IMR-90 (cell line): ENCODE measurements at regions of chr6 and their contacts with region 1.

Region 1: DNA sequence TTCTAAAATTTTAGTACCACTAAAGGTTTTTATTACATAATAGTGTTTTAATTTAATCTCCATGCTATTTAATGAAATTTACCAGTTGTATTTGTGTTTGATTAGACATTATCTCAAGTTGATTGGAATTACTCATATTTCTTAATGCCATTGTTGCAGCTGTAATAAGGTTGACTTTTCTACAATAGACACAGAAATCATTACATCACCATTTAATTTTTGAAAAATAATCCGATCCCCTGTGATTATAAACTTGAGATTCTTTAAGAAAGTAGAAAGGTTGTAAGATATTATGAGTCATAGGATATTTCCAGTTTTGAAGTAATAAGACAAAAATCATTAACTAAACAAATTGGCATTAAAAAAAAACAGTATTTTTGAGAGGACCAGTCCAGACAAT is 161.4 kb downstream of the PRL start:
- DNase-seq: no peak
- ATAC-seq: no peak
- H3K4me3 ChIP-seq: no peak overlapping the region
- H3K27ac ChIP-seq: no peak overlapping the region
- H3K4me1 ChIP-seq: no peaks in the 10 kb centered on the region
- H3K27me3 ChIP-seq: no peaks in the 10 kb centered on the region
- CTCF ChIP-seq: no peak
- POLR2A ChIP-seq: no peak
- RAD21 ChIP-seq: no peak

Region 2: DNA sequence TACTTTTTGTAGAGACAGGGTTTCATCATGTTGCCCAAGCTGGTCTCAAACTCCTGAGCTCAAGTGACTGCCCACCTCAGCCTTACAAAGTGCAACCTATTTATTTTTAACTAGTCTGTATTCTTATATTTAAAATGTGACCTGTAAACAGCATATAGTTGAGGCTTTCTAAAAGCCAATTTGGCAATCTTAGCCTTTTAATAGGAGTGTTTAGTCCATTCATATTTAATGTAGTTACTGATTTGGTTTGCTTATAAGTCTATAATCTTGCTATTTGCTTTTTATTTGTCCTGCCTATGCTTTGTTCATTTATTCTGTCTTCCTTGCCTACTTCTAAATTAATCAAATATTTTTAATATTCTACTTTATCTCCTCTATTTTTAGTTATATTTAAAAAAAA is 556.9 kb before region 1 on chr6:
- CTCF ChIA-PET with region 1: no interaction called
- POLR2A ChIA-PET with region 1: no interaction called
- dilution Hi-C with region 1: no loop called
- in situ Hi-C with region 1: no loop called
- intact Hi-C with region 1: no loop called
- DNase-seq: no peak
- ATAC-seq: no peak
- H3K4me3 ChIP-seq: no peak overlapping the region
- H3K27ac ChIP-seq: no peak overlapping the region
- H3K4me1 ChIP-seq: no peaks in the 10 kb centered on the region
- H3K27me3 ChIP-seq: no peaks in the 10 kb centered on the region
- CTCF ChIP-seq: no peak
- POLR2A ChIP-seq: no peak
- RAD21 ChIP-seq: no peak

Region 3: GRCh38 chr6:22079783-22080182 is 55.6 kb before region 1 on chr6:
- CTCF ChIA-PET with region 1: no interaction called
- POLR2A ChIA-PET with region 1: no interaction called
- dilution Hi-C with region 1: no loop called
- in situ Hi-C with region 1: no loop called
- intact Hi-C with region 1: loop called (anchors 5 kb)
- DNase-seq: peak; percentile 78
- ATAC-seq: peak; percentile 21; the same call in 1 of the 2 replicates
- H3K4me3 ChIP-seq: no peak overlapping the region
- H3K27ac ChIP-seq: no peak overlapping the region
- H3K4me1 ChIP-seq: peaks cover 5% of the 10 kb centered on the region; the same call in 1 of the 2 replicates
- H3K27me3 ChIP-seq: no peaks in the 10 kb centered on the region
- CTCF ChIP-seq: no peak
- POLR2A ChIP-seq: no peak
- RAD21 ChIP-seq: no peak